HCT116 (cell line): ENCODE measurements at regions of chr2 and their contacts with region 1.

Region 1: GRCh38 chr2:120693121-120693520 is 42.5 kb upstream of the GLI2 start:
- DNase-seq: no peak
- ATAC-seq: no peak
- H3K4me3 ChIP-seq: no peak overlapping the region
- H3K27ac ChIP-seq: no peak overlapping the region
- H3K4me1 ChIP-seq: peaks cover 0 to 7% of the 10 kb centered on the region in 2 experiments; a peak in 1 of 4 replicates
- H3K27me3 ChIP-seq: no peaks in the 10 kb centered on the region
- CTCF ChIP-seq: no peak
- POLR2A ChIP-seq: no peak
- RAD21 ChIP-seq: no peak

Region 2: GRCh38 chr2:120879431-120880295 is 186.5 kb after region 1 on chr2:
- CTCF ChIA-PET with region 1: no interaction called
- POLR2A ChIA-PET with region 1: no interaction called
- RAD21 ChIA-PET with region 1: no interaction called
- intact Hi-C with region 1: loop called (anchors 10 kb)
- DNase-seq: no peak
- ATAC-seq: peak; percentile 62
- H3K4me3 ChIP-seq: no peak overlapping the region
- H3K27ac ChIP-seq: no peak overlapping the region
- H3K4me1 ChIP-seq: no peaks in the 10 kb centered on the region
- H3K27me3 ChIP-seq: no peaks in the 10 kb centered on the region; the same call in 1 of the 2 replicates
- CTCF ChIP-seq: peak in 1 of 3 experiments; percentile 17; a peak in 1 of 6 replicates
- POLR2A ChIP-seq: no peak
- RAD21 ChIP-seq: no peak

Region 3: GRCh38 chr2:120949027-120949956 is 256.2 kb after region 1 on chr2:
- CTCF ChIA-PET with region 1: interaction called, 6 read pairs
- POLR2A ChIA-PET with region 1: no interaction called
- RAD21 ChIA-PET with region 1: interaction called, 4 to 6 read pairs
- intact Hi-C with region 1: loop called (anchors 1 kb)
- DNase-seq: no peak
- ATAC-seq: peak; percentile 87
- H3K4me3 ChIP-seq: no peak overlapping the region
- H3K27ac ChIP-seq: no peak overlapping the region
- H3K4me1 ChIP-seq: no peaks in the 10 kb centered on the region
- H3K27me3 ChIP-seq: no peaks in the 10 kb centered on the region
- CTCF ChIP-seq: peak; percentile 52 to 67 (median 63); a peak in 5 of 6 replicates
- POLR2A ChIP-seq: no peak
- RAD21 ChIP-seq: peak; percentile 67

Region 4: DNA sequence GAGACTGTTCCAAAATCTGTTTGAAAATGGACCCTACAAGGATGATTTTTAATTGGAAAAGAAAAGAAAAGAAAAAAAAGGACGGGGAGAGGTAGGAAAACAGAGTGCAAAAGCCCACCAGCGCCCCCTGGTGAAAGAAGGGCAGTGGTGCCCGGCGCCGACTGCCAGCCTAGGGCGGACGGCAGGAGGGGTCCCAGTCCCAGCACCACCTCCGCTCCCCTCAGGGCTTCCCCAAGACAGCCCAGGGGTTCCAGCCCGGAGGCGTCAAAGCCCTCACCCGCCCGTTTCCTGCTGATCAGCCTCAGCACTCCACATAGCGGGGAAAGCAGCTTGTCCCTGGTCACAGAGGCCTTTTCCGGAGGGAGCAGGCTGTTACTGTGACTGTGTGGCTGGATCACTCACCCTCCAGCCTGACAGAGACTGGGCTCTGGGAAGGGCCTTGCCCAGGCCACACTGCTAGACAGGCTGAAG is 377.9 kb after region 1 on chr2:
- CTCF ChIA-PET with region 1: interaction called, 65 read pairs
- POLR2A ChIA-PET with region 1: interaction called, 100 read pairs
- RAD21 ChIA-PET with region 1: interaction called, 11 read pairs
- intact Hi-C with region 1: loop called (anchors 1 kb)
- DNase-seq: peak; percentile 19
- ATAC-seq: peak; percentile 64
- H3K4me3 ChIP-seq: no peak overlapping the region
- H3K27ac ChIP-seq: no peak overlapping the region
- H3K4me1 ChIP-seq: peaks cover 5 to 30% of the 10 kb centered on the region in 2 experiments; a peak in 3 of 4 replicates
- H3K27me3 ChIP-seq: no peaks in the 10 kb centered on the region
- CTCF ChIP-seq: peak; percentile 92 to 96 (median 94)
- POLR2A ChIP-seq: no peak
- RAD21 ChIP-seq: peak; percentile 96

Region 5: DNA sequence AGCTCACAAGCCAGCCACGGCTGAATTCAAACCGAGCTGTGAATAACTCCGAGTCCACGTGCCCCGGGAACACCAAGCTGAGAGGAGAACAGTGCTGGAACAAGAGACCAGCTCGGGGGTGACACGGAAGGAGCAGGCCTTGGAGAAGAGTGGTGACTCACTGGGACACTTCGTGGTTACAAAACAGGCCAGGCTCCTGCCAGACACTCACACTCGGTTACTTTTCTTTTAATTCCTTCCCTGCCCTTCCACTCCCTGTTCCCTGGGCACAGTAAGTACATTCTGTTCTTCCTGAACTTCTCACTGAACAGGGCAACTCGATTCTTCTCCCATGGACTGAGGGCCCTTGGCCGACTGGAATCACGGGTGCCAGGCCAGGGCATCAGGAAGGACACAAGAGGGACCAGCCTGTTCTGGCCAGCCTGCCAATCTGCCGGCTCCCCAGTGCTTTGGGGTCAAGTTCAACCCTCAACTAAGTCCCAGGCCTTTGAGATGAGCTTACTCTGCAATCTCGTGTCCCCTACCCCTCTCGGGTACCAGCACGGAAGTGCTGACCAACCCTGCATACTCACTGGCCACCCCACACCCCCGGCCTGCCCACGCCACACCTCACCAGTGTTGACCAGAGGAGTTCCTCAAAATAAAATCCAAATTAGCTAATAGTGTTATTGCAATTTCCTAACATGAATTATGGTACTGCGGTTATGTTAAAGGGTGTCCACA is 504.4 kb after region 1 on chr2:
- CTCF ChIA-PET with region 1: no interaction called
- POLR2A ChIA-PET with region 1: no interaction called
- RAD21 ChIA-PET with region 1: no interaction called
- intact Hi-C with region 1: no loop called
- DNase-seq: no peak
- ATAC-seq: peak; percentile 54
- H3K4me3 ChIP-seq: no peak overlapping the region
- H3K27ac ChIP-seq: no peak overlapping the region
- H3K4me1 ChIP-seq: peaks cover 0 to 8% of the 10 kb centered on the region in 2 experiments; a peak in 2 of 4 replicates
- H3K27me3 ChIP-seq: no peaks in the 10 kb centered on the region
- CTCF ChIP-seq: no peak
- POLR2A ChIP-seq: no peak
- RAD21 ChIP-seq: no peak